SK-N-SH (cell line): ENCODE measurements at regions of chr18 and their contacts with region 1.

Region 1: GRCh38 chr18:58051765-58052460 is 7.9 kb downstream of the NEDD4L start:
- DNase-seq: no peak
- H3K4me3 ChIP-seq: no peak overlapping the region
- H3K27ac ChIP-seq: no peak overlapping the region
- H3K4me1 ChIP-seq: peaks cover 2 to 8% of the 10 kb centered on the region in 2 experiments; a peak in 2 of 4 replicates
- H3K27me3 ChIP-seq: no peaks in the 10 kb centered on the region
- CTCF ChIP-seq: peak; percentile 55
- EP300 ChIP-seq: no peak
- RAD21 ChIP-seq: peak; percentile 62

Region 2: DNA sequence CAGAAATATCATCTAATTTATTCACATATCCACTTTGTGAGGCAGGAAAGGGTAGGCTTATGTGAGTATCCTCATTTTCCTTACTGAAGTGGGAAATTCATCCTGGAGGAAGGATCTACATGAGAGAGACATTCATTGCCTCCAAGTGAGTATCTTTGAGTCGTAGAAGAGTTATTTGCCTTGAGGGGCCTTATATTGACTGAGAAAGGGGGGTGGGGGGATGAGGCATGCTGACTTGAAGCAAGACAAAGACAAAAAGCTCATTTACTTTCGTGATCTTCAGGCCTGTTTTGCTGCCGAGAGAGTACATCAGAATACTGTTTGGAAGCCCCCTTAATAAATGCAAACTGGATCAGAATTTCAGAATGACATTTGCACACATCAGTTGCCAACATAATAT is 25.5 kb before region 1 on chr18:
- CTCF ChIA-PET with region 1: no interaction called
- POLR2A ChIA-PET with region 1: no interaction called
- DNase-seq: no peak
- H3K4me3 ChIP-seq: no peak overlapping the region
- H3K27ac ChIP-seq: no peak overlapping the region
- H3K4me1 ChIP-seq: no peaks in the 10 kb centered on the region
- H3K27me3 ChIP-seq: no peaks in the 10 kb centered on the region
- CTCF ChIP-seq: no peak
- EP300 ChIP-seq: no peak
- RAD21 ChIP-seq: no peak

Region 3: GRCh38 chr18:58064406-58064998 is 12.6 kb after region 1 on chr18:
- CTCF ChIA-PET with region 1: interaction called, 10 read pairs
- POLR2A ChIA-PET with region 1: no interaction called
- DNase-seq: no peak
- H3K4me3 ChIP-seq: no peak overlapping the region
- H3K27ac ChIP-seq: no peak overlapping the region
- H3K4me1 ChIP-seq: no peaks in the 10 kb centered on the region
- H3K27me3 ChIP-seq: no peaks in the 10 kb centered on the region
- CTCF ChIP-seq: no peak
- EP300 ChIP-seq: no peak
- RAD21 ChIP-seq: no peak

Region 4: GRCh38 chr18:58125183-58125582 is 73.3 kb after region 1 on chr18:
- CTCF ChIA-PET with region 1: interaction called, 37 read pairs
- POLR2A ChIA-PET with region 1: no interaction called
- DNase-seq: no peak
- H3K4me3 ChIP-seq: no peak overlapping the region
- H3K27ac ChIP-seq: no peak overlapping the region
- H3K4me1 ChIP-seq: no peaks in the 10 kb centered on the region
- H3K27me3 ChIP-seq: no peaks in the 10 kb centered on the region
- CTCF ChIP-seq: no peak
- EP300 ChIP-seq: no peak
- RAD21 ChIP-seq: no peak